SK-N-SH (cell line): ENCODE measurements at regions of chr7 and their contacts with region 1.

Region 1: GRCh38 chr7:155738652-155739537 is 73.4 kb downstream of the SHH start:
- DNase-seq: peak; percentile 76
- H3K4me3 ChIP-seq: no peak overlapping the region; a peak in 1 of 4 replicates
- H3K27ac ChIP-seq: no peak overlapping the region
- H3K4me1 ChIP-seq: no peaks in the 10 kb centered on the region
- H3K27me3 ChIP-seq: no peaks in the 10 kb centered on the region
- CTCF ChIP-seq: peak; percentile 93
- EP300 ChIP-seq: no peak
- RAD21 ChIP-seq: peak; percentile 97

Region 2: DNA sequence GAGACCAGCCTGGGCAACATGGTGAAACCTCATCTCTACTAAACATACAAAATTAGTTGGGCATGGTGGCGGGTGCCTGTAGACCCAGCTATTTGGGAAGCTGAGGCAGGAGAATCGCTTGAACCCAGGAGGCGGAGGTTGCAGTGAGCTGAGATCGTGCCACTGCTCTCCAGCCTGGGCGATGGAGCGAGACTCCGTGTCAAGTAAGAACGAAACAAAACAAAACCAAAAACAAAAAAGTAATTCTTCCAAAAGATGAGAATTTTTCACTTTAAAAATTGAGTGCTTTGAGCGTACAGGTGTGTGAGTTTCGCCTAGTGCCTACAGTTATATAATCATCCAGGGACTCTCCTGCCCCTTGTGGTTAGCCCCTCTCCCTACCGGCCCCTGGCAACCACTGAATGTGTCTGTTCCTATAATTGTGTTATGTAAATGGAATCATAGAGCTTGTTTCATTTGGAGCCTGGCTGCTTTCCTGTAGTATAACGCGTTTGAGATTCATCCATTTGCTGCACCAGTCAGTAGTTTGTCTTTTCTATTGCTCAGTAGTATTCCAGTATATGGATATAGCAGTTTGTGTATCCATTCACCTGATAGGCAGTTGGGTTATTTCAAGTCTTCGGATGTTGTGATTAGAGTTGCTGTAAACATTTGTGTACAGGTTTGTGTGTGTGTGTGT is 14.4 kb before region 1 on chr7:
- CTCF ChIA-PET with region 1: interaction called, 10 read pairs
- POLR2A ChIA-PET with region 1: no interaction called
- DNase-seq: peak; percentile 58
- H3K4me3 ChIP-seq: no peak overlapping the region
- H3K27ac ChIP-seq: no peak overlapping the region
- H3K4me1 ChIP-seq: peaks cover 0 to 10% of the 10 kb centered on the region in 2 experiments; a peak in 2 of 4 replicates
- H3K27me3 ChIP-seq: no peaks in the 10 kb centered on the region
- CTCF ChIP-seq: peak; percentile 40; the same call in 1 of the 2 replicates
- EP300 ChIP-seq: no peak
- RAD21 ChIP-seq: peak; percentile 22; the same call in 1 of the 2 replicates

Region 3: DNA sequence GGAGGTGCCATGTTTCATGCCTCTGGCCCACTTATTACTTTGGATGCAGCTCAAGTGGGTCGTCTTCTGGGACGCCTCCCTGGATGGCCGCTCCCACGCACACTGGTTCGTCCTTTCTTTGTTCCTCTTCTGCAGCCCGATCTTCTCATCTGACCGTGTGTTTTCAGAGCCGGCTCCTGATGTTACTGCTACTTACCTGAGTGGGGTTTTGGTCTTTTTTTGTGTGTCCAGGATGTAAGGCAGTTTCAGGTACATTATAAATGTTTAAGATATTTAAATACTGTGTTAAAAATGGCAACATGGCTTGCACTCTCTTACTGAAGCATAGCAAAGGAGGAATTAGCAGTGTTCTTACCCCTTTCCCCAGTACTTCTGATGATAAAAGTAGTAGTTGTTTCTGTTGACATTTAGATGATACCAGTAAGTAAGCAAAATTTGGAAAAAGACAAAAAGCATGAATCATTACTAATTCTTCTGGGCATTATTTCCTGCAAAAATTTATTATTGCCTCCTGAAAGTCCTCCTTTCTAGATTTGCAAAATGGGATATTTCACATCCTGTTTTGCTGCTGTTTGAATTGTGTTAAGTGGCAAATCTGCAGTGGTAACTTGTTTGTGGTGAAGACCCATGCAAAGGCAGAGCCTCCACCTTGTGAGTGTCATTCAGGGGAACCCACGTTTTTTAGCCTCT is 14.0 kb after region 1 on chr7:
- CTCF ChIA-PET with region 1: interaction called, 16 read pairs
- POLR2A ChIA-PET with region 1: no interaction called
- DNase-seq: no peak
- H3K4me3 ChIP-seq: no peak overlapping the region
- H3K27ac ChIP-seq: no peak overlapping the region
- H3K4me1 ChIP-seq: peaks cover 0 to under 1% of the 10 kb centered on the region in 2 experiments; a peak in 2 of 4 replicates
- H3K27me3 ChIP-seq: no peaks in the 10 kb centered on the region
- CTCF ChIP-seq: no peak
- EP300 ChIP-seq: no peak
- RAD21 ChIP-seq: no peak